ENCODE measurements at regions of chr5 and their contacts with region 1.

Region 1: DNA sequence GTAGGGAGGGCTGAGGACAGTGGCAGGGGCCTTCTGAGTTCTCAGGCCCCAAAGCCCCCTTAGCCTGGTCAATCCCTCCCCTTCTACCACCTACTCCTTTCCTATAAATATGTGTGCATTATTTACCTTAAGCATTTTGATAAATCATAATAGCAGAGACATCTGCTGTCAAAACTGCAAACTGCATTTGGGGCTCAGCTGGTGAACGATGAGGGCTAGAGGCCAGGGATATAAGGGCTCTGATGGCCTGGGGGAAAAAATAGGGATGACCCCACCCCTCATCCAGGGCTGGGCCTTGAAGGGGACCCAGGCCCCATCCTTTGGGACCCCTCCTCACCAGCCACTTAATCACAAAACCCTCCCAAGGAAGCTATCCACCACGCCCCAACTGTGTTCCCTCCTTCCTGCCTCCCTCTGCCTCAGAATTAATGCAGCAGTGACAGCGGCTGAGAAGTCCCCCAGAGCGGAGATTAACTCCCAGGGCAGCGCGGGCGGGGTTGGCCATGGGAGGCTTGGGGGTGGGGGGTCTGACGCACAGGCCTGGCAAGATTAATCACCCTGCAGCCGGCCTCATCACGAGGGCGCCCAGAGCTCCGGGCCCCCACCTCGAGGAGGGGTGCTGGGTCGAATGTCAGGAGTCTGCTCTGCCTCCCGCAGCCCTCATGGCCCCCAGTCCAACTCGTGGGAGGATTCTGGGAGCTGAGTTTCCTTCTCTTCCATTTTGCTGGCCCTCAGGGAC is 42.1 kb downstream of the CXXC5 start:
- DNase-seq: peak; percentile 61
- ATAC-seq: peak; percentile 56
- H3K4me3 ChIP-seq: no peak overlapping the region
- H3K27ac ChIP-seq: peak overlapping the region; percentile 26; the same call in 1 of the 2 replicates
- H3K4me1 ChIP-seq: peaks cover 35% of the 10 kb centered on the region
- H3K27me3 ChIP-seq: no peaks in the 10 kb centered on the region
- CTCF ChIP-seq: peak; percentile 58
- POLR2A ChIP-seq: no peak
- RAD21 ChIP-seq: peak; percentile 54

Region 2: GRCh38 chr5:139430015-139430414 is 260.2 kb before region 1 on chr5:
- CTCF ChIA-PET with region 1: no interaction called
- POLR2A ChIA-PET with region 1: no interaction called
- dilution Hi-C with region 1: no loop called
- in situ Hi-C with region 1: no loop called
- intact Hi-C with region 1: no loop called
- DNase-seq: no peak
- ATAC-seq: no peak
- H3K4me3 ChIP-seq: no peak overlapping the region
- H3K27ac ChIP-seq: no peak overlapping the region
- H3K4me1 ChIP-seq: peaks cover 2% of the 10 kb centered on the region; the same call in 1 of the 2 replicates
- H3K27me3 ChIP-seq: no peaks in the 10 kb centered on the region
- CTCF ChIP-seq: no peak
- POLR2A ChIP-seq: no peak
- RAD21 ChIP-seq: no peak

Region 3: GRCh38 chr5:139574641-139575312 is 115.5 kb before region 1 on chr5:
- CTCF ChIA-PET with region 1: no interaction called
- POLR2A ChIA-PET with region 1: no interaction called
- dilution Hi-C with region 1: no loop called
- in situ Hi-C with region 1: no loop called
- intact Hi-C with region 1: loop called (anchors 5 kb)
- DNase-seq: peak; percentile 62
- ATAC-seq: peak; percentile 77
- H3K4me3 ChIP-seq: no peak overlapping the region
- H3K27ac ChIP-seq: no peak overlapping the region
- H3K4me1 ChIP-seq: peaks cover 11% of the 10 kb centered on the region
- H3K27me3 ChIP-seq: no peaks in the 10 kb centered on the region
- CTCF ChIP-seq: peak; percentile 63
- POLR2A ChIP-seq: no peak
- RAD21 ChIP-seq: peak; percentile 58